ENCODE measurements at regions of chr9 and their contacts with region 1.

Region 1: GRCh38 chr9:94794476-94795167 is 68.1 kb downstream of the AOPEP start:
- DNase-seq: no peak
- H3K4me3 ChIP-seq: no peak overlapping the region
- H3K27ac ChIP-seq: no peak overlapping the region
- H3K4me1 ChIP-seq: peaks cover 0 to 55% (median 24%) of the 10 kb centered on the region in 4 donors
- H3K27me3 ChIP-seq: no peaks in the 10 kb centered on the region
- CTCF ChIP-seq: no peak

Region 2: DNA sequence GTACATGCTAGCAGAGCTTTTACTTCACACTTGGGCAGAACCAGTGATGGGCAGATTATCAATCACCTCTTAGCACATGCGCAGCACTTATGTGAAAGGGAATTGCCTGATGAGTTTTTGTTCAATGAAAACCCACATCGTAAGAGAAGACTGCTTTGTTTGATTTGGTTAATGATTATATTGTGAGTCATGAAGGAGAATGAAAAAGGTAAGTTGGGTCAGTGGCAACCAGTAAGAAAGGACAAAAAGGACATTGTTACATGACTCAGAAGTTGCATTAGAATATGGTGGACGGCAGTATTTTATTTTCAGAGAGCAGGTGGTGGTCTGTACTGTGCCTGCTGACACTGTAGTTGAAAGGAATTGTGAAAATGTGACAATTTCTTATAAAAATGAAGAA is 59.3 kb after region 1 on chr9:
- intact Hi-C with region 1: loop called (anchors 2 kb)
- DNase-seq: no peak
- H3K4me3 ChIP-seq: no peak overlapping the region
- H3K27ac ChIP-seq: no peak overlapping the region
- H3K4me1 ChIP-seq: no peaks in the 10 kb centered on the region
- H3K27me3 ChIP-seq: no peaks in the 10 kb centered on the region
- CTCF ChIP-seq: no peak